Transverse colon (tissue), 4 donors: ENCODE measurements at regions of chr6 and their contacts with region 1.

Region 1: GRCh38 chr6:70157086-70157485 is 145.8 kb downstream of the COL9A1 start:
- DNase-seq: no peak
- H3K4me3 ChIP-seq: no peak overlapping the region
- H3K27ac ChIP-seq: no peak overlapping the region
- H3K4me1 ChIP-seq: no peaks in the 10 kb centered on the region
- H3K27me3 ChIP-seq: no peaks in the 10 kb centered on the region
- CTCF ChIP-seq: no peak
- EP300 ChIP-seq: no peak
- POLR2A ChIP-seq: no peak

Region 2: DNA sequence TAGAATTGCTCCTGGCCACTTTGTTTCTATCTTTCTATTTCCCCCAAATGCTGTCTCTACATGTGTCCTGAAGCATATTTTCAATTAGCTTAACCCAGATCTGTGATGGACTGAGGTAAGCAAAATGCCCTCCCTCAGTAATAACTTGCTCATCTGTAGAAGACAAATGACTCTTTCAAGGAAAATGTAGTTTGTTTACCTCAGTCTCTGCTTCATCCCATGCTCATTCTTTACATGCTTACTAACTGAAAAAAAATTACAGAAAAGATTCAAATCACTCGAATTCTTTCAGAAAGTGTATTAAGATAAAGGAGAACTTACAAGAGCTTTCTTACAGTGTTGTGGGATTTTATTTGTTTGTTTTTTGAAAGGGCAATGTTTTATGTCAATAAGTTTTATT is 891.4 kb before region 1 on chr6:
- in situ Hi-C with region 1: no loop called
- intact Hi-C with region 1: loop called (anchors 5 kb)
- DNase-seq: no peak
- H3K4me3 ChIP-seq: no peak overlapping the region
- H3K27ac ChIP-seq: no peak overlapping the region
- H3K4me1 ChIP-seq: no peaks in the 10 kb centered on the region
- H3K27me3 ChIP-seq: no peaks in the 10 kb centered on the region
- CTCF ChIP-seq: no peak
- EP300 ChIP-seq: no peak
- POLR2A ChIP-seq: no peak